Activated CD4-positive, alpha-beta memory T cell treated with anti-CD3 and anti-CD28 coated beads for 36 hours (primary cell): ENCODE measurements at regions of chr7 and their contacts with region 1.

Region 1: DNA sequence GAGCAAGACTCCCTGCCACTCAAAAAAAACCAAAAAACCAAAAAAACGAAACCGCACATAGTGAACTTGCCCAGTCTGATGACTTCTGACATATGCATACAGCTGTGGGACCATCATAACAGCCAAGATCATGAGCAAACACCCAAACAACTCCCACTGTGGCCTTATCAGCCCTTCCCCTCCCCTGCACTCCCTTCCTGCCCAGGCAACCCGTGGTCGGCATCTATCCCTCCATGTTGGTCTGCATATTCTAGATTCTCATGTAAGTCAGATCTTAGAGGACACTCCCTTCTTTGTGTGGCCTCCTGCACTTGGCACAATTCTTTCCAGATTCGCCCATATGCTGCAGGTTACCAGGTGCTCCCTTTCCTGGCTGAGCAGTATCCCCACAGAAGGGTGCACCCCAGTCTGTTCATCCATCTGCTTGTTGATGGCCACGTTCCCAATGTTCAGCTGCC is 72.8 kb downstream of the GNA12 start:
- DNase-seq: no peak
- H3K4me3 Mint-ChIP-seq: no peak overlapping the region
- H3K27ac Mint-ChIP-seq: no peak overlapping the region
- H3K4me1 Mint-ChIP-seq: peaks cover 43% of the 10 kb centered on the region
- H3K27me3 Mint-ChIP-seq: no peaks in the 10 kb centered on the region

Region 2: GRCh38 chr7:2632733-2633537 is 138.4 kb before region 1 on chr7:
- CTCF ChIA-PET with region 1: no interaction called
- POLR2A ChIA-PET with region 1: no interaction called
- intact Hi-C with region 1: no loop called
- DNase-seq: peak; percentile 66
- H3K4me3 Mint-ChIP-seq: peak overlapping the region; percentile 87
- H3K27ac Mint-ChIP-seq: peak overlapping the region; percentile 60
- H3K4me1 Mint-ChIP-seq: peaks cover 15% of the 10 kb centered on the region
- H3K27me3 Mint-ChIP-seq: peaks cover 1% of the 10 kb centered on the region

Region 3: GRCh38 chr7:2720582-2721491 is 50.5 kb before region 1 on chr7:
- CTCF ChIA-PET with region 1: interaction called, 3 read pairs
- POLR2A ChIA-PET with region 1: no interaction called
- intact Hi-C with region 1: loop called (anchors 5 kb)
- DNase-seq: peak; percentile 95
- H3K4me3 Mint-ChIP-seq: peak overlapping the region; percentile 16
- H3K27ac Mint-ChIP-seq: peak overlapping the region; percentile 56
- H3K4me1 Mint-ChIP-seq: peaks cover 47% of the 10 kb centered on the region
- H3K27me3 Mint-ChIP-seq: no peaks in the 10 kb centered on the region

Region 4: GRCh38 chr7:2781636-2782035 is 10.3 kb after region 1 on chr7:
- CTCF ChIA-PET with region 1: no interaction called
- POLR2A ChIA-PET with region 1: interaction called, 3 read pairs
- intact Hi-C with region 1: loop called (anchors 1 kb)
- DNase-seq: no peak
- H3K4me3 Mint-ChIP-seq: no peak overlapping the region
- H3K27ac Mint-ChIP-seq: no peak overlapping the region
- H3K4me1 Mint-ChIP-seq: peaks cover 24% of the 10 kb centered on the region
- H3K27me3 Mint-ChIP-seq: no peaks in the 10 kb centered on the region

Region 5: DNA sequence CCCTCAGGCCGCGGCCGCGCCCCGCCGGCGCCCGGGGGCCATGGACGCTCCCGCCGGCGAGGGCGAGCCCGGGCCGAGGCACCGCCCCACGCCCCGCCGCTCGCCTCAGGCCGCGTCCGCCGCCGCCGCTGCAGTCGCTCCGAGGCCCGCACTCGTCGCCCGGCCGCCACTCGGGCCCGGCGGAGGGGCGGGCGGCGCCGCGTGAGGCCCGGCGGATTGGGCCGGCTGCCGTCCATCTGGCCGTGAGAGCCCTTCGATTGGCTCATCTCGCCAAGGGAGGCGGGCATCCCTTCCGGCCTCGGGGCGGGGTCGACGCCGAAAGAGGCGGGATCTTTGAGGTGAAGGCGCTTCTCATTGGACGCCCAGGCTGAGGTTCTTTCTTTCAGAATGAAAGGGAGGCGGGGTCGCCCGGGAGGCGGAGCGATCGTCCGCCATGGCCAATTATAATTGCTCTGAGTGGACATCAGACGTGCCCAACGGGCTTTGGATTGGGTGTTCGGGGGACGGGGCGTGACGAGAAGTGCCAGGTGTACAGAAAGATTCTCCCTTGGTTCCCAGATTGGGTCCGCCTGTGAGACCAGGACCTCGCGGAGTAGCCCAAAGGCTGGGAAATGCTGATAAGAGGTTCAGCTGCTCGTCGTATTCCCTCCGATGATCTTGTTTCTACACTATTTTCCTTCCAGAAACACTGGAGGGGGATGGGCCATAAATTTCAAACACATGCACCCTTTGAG is 73.0 kb after region 1 on chr7 and contains the start of gene GNA12:
- CTCF ChIA-PET with region 1: no interaction called
- POLR2A ChIA-PET with region 1: no interaction called
- intact Hi-C with region 1: loop called (anchors 5 kb)
- DNase-seq: peak; percentile 99
- H3K4me3 Mint-ChIP-seq: peak within 1 kb of the TSS; percentile 74
- H3K27ac Mint-ChIP-seq: peak within 1 kb of the TSS; percentile 42
- H3K4me1 Mint-ChIP-seq: peaks cover 42% of the 10 kb centered on the region
- H3K27me3 Mint-ChIP-seq: no peaks in the 10 kb centered on the region
- total RNA-seq, gene GNA12: 23.6 to 23.7 TPM

Region 6: GRCh38 chr7:3042861-3043489 is 271.7 kb after region 1 on chr7:
- CTCF ChIA-PET with region 1: no interaction called
- POLR2A ChIA-PET with region 1: no interaction called
- intact Hi-C with region 1: no loop called
- DNase-seq: peak; percentile 89
- H3K4me3 Mint-ChIP-seq: peak overlapping the region; percentile 98
- H3K27ac Mint-ChIP-seq: peak overlapping the region; percentile 99
- H3K4me1 Mint-ChIP-seq: peaks cover 46% of the 10 kb centered on the region
- H3K27me3 Mint-ChIP-seq: no peaks in the 10 kb centered on the region